ENCODE measurements at regions of chr7 and their contacts with region 1.

Region 1: DNA sequence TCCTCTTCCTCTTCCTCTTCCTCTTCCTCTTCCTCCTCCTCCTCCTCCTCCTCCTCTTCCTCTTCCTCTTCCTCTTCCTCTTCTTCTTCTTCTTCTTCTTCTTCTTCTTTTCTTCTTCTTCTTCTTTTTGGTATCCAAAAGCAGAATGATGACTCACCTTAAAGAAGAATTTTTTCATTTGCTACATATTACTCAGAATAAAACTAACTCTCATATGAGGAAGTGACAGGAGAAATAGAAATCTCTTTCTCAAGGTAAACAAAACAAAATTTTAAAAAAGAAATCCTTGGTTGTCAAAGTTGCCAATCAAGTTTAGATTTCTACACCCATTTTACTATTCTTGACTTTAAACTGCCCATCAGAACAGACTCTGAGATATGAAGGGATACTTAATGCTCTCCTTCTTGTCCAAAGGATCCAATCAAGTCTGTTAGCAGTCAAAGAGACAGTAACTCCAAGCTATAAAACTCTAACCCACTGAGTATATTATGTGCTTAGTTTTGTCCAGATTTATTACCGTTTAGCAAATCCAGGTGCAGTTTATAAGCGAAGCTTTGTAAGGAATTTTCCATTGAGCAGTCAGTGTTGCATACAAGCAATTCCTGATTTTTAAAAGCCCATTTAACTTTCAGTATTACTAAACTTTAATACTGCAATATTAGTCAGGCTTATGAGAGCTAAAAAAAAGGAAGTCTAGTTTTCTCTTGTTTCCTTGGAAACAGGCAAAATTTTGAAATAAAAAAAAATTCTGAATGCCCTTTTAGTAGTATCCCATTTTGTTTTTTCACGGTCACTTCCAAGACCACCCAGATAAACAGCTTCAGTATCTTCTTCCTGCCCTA is 43.1 kb upstream of the SNX13 start:
- DNase-seq: no peak

Region 2: GRCh38 chr7:19239951-19240350 is 1256.5 kb after region 1 on chr7:
- intact Hi-C with region 1: loop called in 1 of 2 experiments (anchors 5 kb)
- DNase-seq: no peak